K562 (cell line): ENCODE measurements at regions of chr11 and their contacts with region 1.

Region 1: DNA sequence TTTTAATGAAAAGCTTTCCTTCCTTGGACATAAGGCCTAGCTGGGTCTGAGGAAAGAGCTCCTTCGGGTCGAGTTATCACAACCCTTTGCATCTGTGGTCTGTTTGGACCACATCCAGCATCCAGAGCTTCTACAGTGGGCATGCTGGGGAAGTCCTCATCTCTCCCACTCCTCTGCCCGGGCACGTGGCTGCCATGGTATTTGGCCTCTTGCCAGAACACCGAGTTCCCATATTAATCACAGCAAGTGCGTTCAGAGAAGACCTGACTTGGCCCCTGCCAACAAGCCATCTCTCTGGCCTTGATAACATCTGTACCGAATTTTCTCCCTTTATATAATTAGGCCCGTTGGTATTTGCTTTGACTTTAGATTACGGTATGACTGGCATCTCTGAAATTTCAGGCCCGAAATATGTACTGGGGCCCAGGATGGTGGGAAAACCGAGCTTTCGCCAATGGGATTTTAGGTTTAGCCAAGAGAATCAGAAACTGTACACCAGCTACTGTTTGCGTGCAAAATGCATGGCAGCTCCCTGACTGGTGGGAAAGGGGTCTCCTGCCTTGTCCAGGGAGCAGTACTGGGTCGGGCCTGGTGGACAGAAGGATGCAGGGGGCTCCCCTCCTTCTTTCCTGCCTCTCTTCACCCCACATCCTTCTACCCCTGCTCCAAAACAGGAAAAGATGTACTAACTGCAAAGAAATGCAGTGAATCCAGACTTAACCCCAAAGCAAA is 90.1 kb downstream of the MICAL2 start:
- DNase-seq: peak in 1 of 4 experiments; percentile 32
- ATAC-seq: peak; percentile 1; the same call in 1 of the 3 replicates
- H3K4me3 ChIP-seq: no peak overlapping the region
- H3K27ac ChIP-seq: peak overlapping the region; percentile 89
- H3K4me1 ChIP-seq: peaks cover 28 to 58% of the 10 kb centered on the region in 2 experiments
- H3K27me3 ChIP-seq: no peaks in the 10 kb centered on the region; a peak in 1 of 5 replicates
- CTCF ChIP-seq: no peak
- EP300 ChIP-seq: no peak
- POLR2A ChIP-seq: no peak
- RAD21 ChIP-seq: no peak

Region 2: GRCh38 chr11:12126344-12127019 is 74.0 kb before region 1 on chr11:
- CTCF ChIA-PET with region 1: no interaction called
- POLR2A ChIA-PET with region 1: interaction called, 3 read pairs
- in situ Hi-C with region 1: no loop called
- intact Hi-C with region 1: loop called (anchors 2 kb)
- DNase-seq: peak in 1 of 4 experiments; percentile 36
- ATAC-seq: peak; percentile 13; the same call in 1 of the 3 replicates
- H3K4me3 ChIP-seq: no peak overlapping the region
- H3K27ac ChIP-seq: no peak overlapping the region; the same call in 2 of the 3 replicates
- H3K4me1 ChIP-seq: peaks cover 27 to 55% of the 10 kb centered on the region in 2 experiments
- H3K27me3 ChIP-seq: no peaks in the 10 kb centered on the region
- CTCF ChIP-seq: peak in 2 of 3 experiments; percentile 14 to 32; a peak in 2 of 6 replicates
- EP300 ChIP-seq: no peak
- POLR2A ChIP-seq: no peak
- RAD21 ChIP-seq: peak in 1 of 2 experiments; percentile 26; a peak in 1 of 4 replicates

Region 3: DNA sequence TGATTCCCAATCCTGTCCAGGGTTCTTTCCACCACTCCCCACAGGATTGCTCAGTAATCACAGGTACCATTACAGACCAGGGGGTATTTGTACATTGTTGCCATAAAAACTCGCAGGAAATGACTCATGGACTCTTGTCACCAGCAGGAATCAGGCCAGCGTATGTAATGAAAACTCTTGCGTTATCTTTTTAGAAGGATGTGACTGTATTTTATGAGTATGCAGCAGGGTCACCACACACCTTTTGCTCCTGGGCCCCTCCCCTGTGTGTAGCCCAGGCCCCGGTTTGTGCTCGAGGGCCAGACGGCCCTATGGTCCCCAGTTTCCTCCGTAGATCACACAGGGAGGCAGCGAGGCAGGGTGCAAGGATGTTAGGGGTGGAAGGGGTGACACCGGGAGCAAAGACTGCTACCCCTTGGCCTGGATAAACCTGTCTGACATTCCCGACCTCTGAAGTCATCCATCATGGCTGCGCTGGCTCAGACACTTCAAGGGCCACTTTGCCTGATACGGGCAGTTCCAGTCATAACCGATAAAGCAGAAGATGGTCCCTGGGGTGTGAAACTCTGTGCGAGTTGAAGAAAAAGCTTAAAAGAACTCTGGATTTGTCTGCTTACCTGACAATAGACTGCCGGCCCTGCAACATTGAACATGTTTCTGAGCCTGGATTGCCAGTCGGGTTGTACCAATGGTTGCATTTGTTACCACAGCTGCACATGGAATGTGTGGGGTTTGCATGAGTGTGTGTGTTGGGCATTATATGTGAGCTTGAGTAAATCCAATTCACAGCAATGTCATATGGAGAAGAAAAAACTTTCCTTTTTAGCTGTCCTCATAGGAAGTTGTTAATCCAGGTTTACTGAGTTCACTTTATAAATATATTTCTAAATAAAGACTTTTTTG is 33.1 kb before region 1 on chr11:
- CTCF ChIA-PET with region 1: no interaction called
- POLR2A ChIA-PET with region 1: no interaction called
- in situ Hi-C with region 1: no loop called
- intact Hi-C with region 1: loop called (anchors 5 kb)
- DNase-seq: peak; percentile 62 to 88 (median 70)
- ATAC-seq: peak; percentile 88
- H3K4me3 ChIP-seq: no peak overlapping the region
- H3K27ac ChIP-seq: peak overlapping the region; percentile 91
- H3K4me1 ChIP-seq: peaks cover 19 to 35% of the 10 kb centered on the region in 2 experiments
- H3K27me3 ChIP-seq: no peaks in the 10 kb centered on the region
- CTCF ChIP-seq: no peak
- EP300 ChIP-seq: peak; percentile 89
- POLR2A ChIP-seq: no peak
- RAD21 ChIP-seq: peak in 1 of 2 experiments; percentile 20; a peak in 1 of 4 replicates

Region 4: DNA sequence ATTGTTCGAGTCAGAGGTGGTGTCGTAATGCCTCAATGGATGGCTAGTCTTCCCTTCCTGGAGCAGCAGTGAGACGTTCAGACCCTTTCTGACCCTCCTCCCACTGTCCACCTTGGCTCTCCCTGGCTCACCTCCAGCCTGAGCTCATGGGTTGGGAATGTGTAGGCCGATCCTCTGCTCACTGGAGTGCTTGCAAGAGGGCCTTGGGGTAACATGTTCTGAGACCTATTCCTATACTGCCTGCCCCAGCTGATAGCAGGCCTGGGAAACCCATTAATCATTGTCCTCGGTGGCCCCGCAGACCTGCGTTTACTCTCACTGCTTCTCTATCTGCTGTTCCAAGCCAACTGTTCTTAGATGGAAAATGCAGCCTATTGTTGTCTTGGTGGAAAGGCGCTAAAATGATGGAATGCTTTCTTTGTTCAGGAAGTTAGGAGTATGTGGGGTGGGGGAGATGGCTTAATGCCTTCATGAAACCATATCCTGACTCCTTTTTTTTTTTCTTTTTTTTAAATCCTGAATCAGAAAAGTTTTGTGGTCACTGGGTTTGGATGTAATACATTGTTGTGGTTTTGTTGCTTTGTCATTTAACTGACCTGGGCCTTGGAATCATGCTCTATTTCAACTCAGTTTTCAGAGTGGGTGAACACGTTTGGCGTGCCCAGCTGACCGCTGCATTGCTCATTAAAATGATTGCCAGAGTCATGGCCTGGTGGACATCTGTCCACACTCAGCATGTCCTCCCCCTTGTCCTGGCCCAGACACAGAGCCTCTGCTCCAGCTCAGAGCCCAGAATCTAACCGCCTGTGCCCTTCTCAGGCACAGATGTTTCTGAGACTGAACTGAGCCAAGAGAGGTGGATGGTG is 17.5 kb before region 1 on chr11:
- CTCF ChIA-PET with region 1: no interaction called
- POLR2A ChIA-PET with region 1: interaction called, 12 read pairs
- in situ Hi-C with region 1: no loop called
- intact Hi-C with region 1: loop called (anchors 2 kb)
- DNase-seq: peak; percentile 80 to 91 (median 83)
- ATAC-seq: peak; percentile 90
- H3K4me3 ChIP-seq: no peak overlapping the region
- H3K27ac ChIP-seq: peak overlapping the region; percentile 81
- H3K4me1 ChIP-seq: peaks cover 41 to 49% of the 10 kb centered on the region in 2 experiments
- H3K27me3 ChIP-seq: no peaks in the 10 kb centered on the region
- CTCF ChIP-seq: no peak
- EP300 ChIP-seq: peak; percentile 76
- POLR2A ChIP-seq: no peak
- RAD21 ChIP-seq: peak in 1 of 2 experiments; percentile 22; a peak in 1 of 4 replicates

Region 5: DNA sequence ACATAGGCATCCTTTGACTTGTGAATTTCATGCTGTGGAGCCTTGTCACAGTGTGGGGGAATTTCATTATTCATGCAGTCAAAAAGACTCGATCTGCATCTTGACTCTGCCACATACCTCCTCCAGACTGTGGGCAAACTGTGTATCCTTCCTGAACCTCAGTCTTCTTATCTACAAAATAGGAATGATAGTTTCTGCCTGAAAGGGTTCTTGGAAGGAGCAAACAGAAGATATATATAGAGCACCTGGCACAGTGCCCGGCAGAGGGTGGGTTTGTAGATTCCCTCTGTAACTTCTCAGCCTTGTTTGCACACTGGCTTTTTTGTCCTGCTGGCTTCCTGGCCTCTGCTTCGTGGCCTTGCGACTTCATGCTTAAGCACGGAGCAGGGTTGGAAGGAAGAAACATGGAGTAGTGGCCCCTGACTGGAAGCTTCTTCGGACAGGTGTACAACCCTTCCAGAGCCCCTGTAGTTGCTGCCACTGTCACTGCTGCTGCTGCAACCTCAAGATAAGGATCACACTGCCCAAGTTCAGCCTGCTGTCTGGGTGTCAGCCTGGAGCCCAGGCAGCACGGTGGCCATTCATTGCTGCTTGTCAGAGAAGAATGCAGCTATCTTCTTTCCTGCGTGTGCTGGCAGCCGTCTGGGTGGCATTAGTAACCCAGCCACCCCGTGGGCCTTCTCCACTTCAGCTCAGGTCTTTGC is 16.4 kb after region 1 on chr11:
- CTCF ChIA-PET with region 1: no interaction called
- POLR2A ChIA-PET with region 1: interaction called, 21 read pairs
- in situ Hi-C with region 1: no loop called
- intact Hi-C with region 1: no loop called
- DNase-seq: peak in 1 of 4 experiments; percentile 40
- ATAC-seq: peak; percentile 43
- H3K4me3 ChIP-seq: no peak overlapping the region
- H3K27ac ChIP-seq: no peak overlapping the region
- H3K4me1 ChIP-seq: peaks cover 6 to 13% of the 10 kb centered on the region in 2 experiments; a peak in 4 of 5 replicates
- H3K27me3 ChIP-seq: no peaks in the 10 kb centered on the region
- CTCF ChIP-seq: no peak
- EP300 ChIP-seq: no peak
- POLR2A ChIP-seq: no peak
- RAD21 ChIP-seq: no peak